CD8-positive, alpha-beta T cell (primary cell): ENCODE measurements at regions of chr11 and their contacts with region 1.

Region 1: GRCh38 chr11:128630367-128631230 is 43.2 kb upstream of the ETS1 start:
- DNase-seq: peak; percentile 85 to 96 (median 93)
- ATAC-seq: peak; percentile 75
- H3K4me3 ChIP-seq: no peak overlapping the region
- H3K4me3 Mint-ChIP-seq: peak overlapping the region; percentile 61
- H3K27ac ChIP-seq: peak overlapping the region in 1 of 2 experiments; percentile 38
- H3K27ac Mint-ChIP-seq: peak overlapping the region; percentile 98
- H3K4me1 ChIP-seq: peaks cover 67% of the 10 kb centered on the region
- H3K4me1 Mint-ChIP-seq: peaks cover 65% of the 10 kb centered on the region
- H3K27me3 ChIP-seq: no peaks in the 10 kb centered on the region
- H3K27me3 Mint-ChIP-seq: no peaks in the 10 kb centered on the region
- CTCF ChIP-seq: peak; percentile 82

Region 2: DNA sequence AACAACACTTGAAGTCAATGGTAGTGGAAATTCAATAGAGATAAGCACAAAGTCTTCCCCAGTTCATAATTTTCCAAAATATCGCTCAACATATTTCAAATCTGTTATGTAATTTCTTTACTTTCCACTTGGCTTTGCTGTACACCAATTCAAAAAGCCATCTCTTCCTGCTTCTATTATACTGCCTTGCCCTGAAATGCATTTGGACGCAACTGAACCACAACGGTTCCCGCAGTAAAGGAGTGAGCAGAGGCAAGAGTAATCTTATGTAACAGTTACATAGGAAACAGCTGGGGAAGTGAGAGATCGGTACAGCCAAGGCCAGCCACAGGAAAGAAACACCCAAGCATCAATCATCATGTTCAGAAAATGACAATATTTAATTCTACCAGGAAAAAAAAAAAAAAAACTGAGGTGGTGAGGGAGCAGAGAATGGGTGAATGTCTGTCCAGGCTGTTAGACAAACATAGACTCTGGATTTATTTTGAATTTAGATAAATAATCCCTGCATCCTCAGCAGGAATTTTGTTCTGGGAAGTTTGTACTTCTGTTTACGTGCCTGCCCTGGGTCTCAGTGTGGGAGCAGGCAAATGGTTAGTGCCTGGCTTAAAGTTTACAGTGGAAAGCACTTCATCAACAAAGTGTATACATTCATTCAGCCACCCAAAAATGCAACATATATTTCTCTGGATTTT is 435.4 kb before region 1 on chr11:
- CTCF ChIA-PET with region 1: interaction called, 31 read pairs
- POLR2A ChIA-PET with region 1: interaction called, 4 read pairs
- intact Hi-C with region 1: loop called (anchors 1 kb)
- DNase-seq: peak; percentile 8 to 88 (median 44)
- ATAC-seq: peak; percentile 86
- H3K4me3 ChIP-seq: no peak overlapping the region
- H3K4me3 Mint-ChIP-seq: peak overlapping the region; percentile 23
- H3K27ac ChIP-seq: peak overlapping the region in 1 of 2 experiments; percentile 60
- H3K27ac Mint-ChIP-seq: peak overlapping the region; percentile 57
- H3K4me1 ChIP-seq: peaks cover 34% of the 10 kb centered on the region
- H3K4me1 Mint-ChIP-seq: peaks cover 32% of the 10 kb centered on the region
- H3K27me3 ChIP-seq: no peaks in the 10 kb centered on the region
- H3K27me3 Mint-ChIP-seq: no peaks in the 10 kb centered on the region
- CTCF ChIP-seq: peak; percentile 55

Region 3: GRCh38 chr11:128472128-128473089 is 158.2 kb before region 1 on chr11:
- CTCF ChIA-PET with region 1: interaction called, 62 read pairs
- POLR2A ChIA-PET with region 1: interaction called, 10 read pairs
- intact Hi-C with region 1: loop called in 1 of 2 experiments (anchors 5 kb)
- DNase-seq: peak in 5 of 9 experiments; percentile 46 to 81 (median 63)
- ATAC-seq: peak; percentile 33
- H3K4me3 ChIP-seq: peak overlapping the region; percentile 4 to 33
- H3K4me3 Mint-ChIP-seq: peak overlapping the region; percentile 74
- H3K27ac ChIP-seq: peak overlapping the region; percentile 68 to 88
- H3K27ac Mint-ChIP-seq: peak overlapping the region; percentile 94
- H3K4me1 ChIP-seq: peaks cover 99% of the 10 kb centered on the region
- H3K4me1 Mint-ChIP-seq: peaks cover 99% of the 10 kb centered on the region
- H3K27me3 ChIP-seq: no peaks in the 10 kb centered on the region
- H3K27me3 Mint-ChIP-seq: no peaks in the 10 kb centered on the region
- CTCF ChIP-seq: no peak

Region 4: DNA sequence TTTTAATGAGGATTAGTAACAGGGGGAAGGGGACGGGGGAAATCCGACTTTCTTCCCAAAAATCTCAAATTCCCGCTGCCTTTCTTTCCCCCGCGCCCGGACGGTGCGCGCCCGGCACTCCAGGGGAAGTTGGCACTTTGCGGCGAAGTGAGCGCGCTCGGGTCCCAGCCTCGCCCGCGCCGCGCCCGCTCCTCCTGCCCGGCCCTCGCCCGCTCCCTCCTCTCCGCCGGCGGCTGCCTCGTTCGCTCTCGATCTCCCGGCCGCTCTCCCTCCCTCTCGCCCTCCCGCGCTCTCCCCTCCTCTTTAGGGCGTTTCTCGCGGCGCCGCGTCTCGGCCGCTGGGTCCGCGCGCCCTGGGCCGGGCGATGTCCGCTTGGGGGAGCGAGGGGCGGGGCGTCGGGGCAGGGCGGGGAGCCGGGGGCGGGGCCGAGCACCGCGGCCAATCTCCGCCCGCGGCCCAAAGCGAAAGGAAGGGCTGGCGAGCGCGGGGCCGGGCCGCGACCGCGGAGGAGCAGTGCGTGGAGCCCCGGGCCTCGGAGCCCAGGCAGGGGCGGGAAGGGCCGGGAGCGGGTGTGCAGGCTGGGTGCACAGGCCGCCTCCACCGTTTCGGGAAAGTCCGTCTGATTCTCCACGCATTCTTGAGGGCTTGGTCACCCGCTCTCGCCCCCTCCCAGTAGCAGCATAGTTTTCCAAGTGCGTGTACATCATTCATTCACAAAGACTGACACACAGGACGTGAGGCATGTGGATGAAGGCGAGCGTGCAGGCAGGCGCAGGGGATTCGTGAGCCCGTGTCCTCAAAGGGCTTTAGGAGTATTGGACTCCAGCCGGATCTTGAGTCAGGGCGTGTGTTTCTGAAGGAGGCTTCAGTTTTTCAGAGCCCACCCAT is 108.3 kb before region 1 on chr11:
- CTCF ChIA-PET with region 1: interaction called, 173 read pairs
- POLR2A ChIA-PET with region 1: interaction called, 274 read pairs
- intact Hi-C with region 1: loop called (anchors 1 to 2 kb)
- DNase-seq: peak; percentile 80 to 96 (median 91)
- ATAC-seq: peak; percentile 62
- H3K4me3 ChIP-seq: peak overlapping the region; percentile 94 to 97
- H3K4me3 Mint-ChIP-seq: peak overlapping the region; percentile 98
- H3K27ac ChIP-seq: peak overlapping the region; percentile 86 to 91
- H3K27ac Mint-ChIP-seq: peak overlapping the region; percentile 98
- H3K4me1 ChIP-seq: peaks cover 44% of the 10 kb centered on the region
- H3K4me1 Mint-ChIP-seq: peaks cover 50% of the 10 kb centered on the region
- H3K27me3 ChIP-seq: no peaks in the 10 kb centered on the region
- H3K27me3 Mint-ChIP-seq: no peaks in the 10 kb centered on the region
- CTCF ChIP-seq: no peak

Region 5: GRCh38 chr11:128643661-128644317 is 13.2 kb after region 1 on chr11:
- CTCF ChIA-PET with region 1: interaction called, 16 read pairs
- POLR2A ChIA-PET with region 1: no interaction called
- intact Hi-C with region 1: no loop called
- DNase-seq: no peak
- ATAC-seq: no peak
- H3K4me3 ChIP-seq: no peak overlapping the region
- H3K4me3 Mint-ChIP-seq: no peak overlapping the region
- H3K27ac ChIP-seq: no peak overlapping the region
- H3K27ac Mint-ChIP-seq: no peak overlapping the region
- H3K4me1 ChIP-seq: no peaks in the 10 kb centered on the region
- H3K4me1 Mint-ChIP-seq: peaks cover 5% of the 10 kb centered on the region
- H3K27me3 ChIP-seq: no peaks in the 10 kb centered on the region
- H3K27me3 Mint-ChIP-seq: no peaks in the 10 kb centered on the region
- CTCF ChIP-seq: no peak

Region 6: DNA sequence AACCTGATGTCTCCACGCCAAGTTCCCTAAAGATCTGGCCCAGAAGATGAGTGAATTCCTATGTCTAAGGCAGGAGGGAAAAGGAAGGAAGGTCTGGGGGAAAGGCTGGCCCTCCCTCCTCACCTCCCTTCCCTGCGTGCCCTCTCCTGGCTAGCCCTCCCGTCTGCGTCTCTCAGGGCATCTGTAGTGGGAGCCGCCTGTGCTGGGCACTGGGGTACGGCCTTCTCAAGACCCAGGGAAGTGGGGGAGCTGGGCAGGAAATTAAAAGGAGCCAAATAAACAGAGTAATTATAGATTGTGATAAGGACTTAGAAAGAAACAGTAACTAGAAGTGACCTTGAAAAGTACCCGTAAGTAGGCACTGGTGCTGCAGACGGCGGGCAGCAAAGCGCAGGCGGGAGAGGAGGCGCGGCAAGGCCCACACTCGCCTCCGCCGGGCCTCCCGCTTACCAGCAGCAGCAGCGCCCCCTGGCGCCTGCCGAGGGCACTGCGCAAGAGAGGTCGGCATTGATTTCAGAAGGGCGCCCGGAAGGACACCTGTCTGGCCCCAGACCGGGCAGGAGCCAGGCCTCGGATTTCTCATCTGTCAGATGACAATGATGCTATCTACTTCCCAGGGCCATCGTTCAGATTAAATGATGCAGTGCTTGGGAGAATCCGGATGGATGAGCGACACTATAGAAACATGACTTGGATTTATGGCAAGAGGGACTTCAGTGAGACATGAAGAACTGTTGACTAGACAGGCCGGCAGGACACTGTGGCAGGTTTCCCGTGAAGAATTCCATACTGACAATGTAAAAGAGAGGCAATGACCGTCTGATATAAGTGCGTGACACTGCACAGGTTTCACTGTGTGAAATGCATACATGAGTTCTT is 229.2 kb after region 1 on chr11:
- CTCF ChIA-PET with region 1: interaction called, 10 read pairs
- POLR2A ChIA-PET with region 1: no interaction called
- intact Hi-C with region 1: no loop called
- DNase-seq: peak; percentile 64 to 83 (median 75)
- ATAC-seq: peak; percentile 97
- H3K4me3 ChIP-seq: no peak overlapping the region
- H3K4me3 Mint-ChIP-seq: no peak overlapping the region
- H3K27ac ChIP-seq: no peak overlapping the region
- H3K27ac Mint-ChIP-seq: no peak overlapping the region
- H3K4me1 ChIP-seq: no peaks in the 10 kb centered on the region
- H3K4me1 Mint-ChIP-seq: peaks cover 4% of the 10 kb centered on the region
- H3K27me3 ChIP-seq: no peaks in the 10 kb centered on the region
- H3K27me3 Mint-ChIP-seq: peaks cover 2% of the 10 kb centered on the region
- CTCF ChIP-seq: peak; percentile 99